Activated naive CD4-positive, alpha-beta T cell treated with anti-CD3 and anti-CD28 coated beads for 36 hours (primary cell): ENCODE measurements at regions of chr1 and their contacts with region 1.

Region 1: GRCh38 chr1:165914136-165914798 is 86.9 kb downstream of the UCK2 start:
- DNase-seq: peak; percentile 82
- H3K4me3 Mint-ChIP-seq: no peak overlapping the region
- H3K27ac Mint-ChIP-seq: no peak overlapping the region
- H3K4me1 Mint-ChIP-seq: no peaks in the 10 kb centered on the region
- H3K27me3 Mint-ChIP-seq: no peaks in the 10 kb centered on the region

Region 2: DNA sequence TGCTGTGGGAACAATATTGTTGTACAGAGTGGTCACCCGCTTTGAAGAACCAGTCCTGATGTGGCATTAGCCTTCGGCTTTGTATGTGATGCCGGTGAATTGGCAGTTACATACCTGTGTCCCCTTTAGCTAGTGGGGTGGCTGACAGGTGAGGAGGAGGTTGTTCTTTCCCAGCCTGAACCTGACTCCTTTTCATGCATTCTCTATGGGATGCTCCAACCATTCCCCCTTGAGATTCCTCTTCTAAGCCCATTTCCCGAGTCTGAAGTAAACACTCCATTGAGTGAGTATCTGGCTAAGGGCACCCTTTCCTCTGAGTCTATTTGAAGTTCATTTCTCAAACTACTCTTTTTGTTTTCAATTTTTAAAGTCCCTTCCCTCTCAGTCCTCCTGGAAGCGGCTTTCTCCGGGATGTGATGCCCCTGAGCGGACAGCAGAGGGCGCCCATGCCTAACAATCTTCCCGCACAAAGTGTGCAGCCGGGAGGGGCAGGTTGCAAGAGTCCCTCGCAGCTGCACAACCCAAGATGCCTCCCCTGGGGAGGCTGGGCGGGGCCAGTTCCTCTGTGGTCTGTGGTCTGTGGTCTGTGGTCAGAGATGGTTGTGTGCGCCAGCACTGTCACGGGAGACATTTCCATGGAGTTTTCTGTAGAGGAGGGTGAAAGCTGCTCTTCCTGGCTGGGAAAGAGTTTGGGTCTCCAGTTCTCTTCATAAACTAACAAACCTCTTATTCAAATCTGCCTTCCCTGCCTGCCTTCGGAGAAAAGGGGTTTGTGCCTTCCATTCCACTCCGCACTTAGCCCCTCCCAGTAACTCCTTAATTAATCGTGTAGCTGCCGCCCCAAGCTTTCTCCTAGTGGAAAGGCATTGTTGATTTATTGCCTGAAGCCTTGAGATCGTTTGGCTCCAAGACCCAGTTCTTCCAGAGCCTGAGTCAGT is 521.4 kb before region 1 on chr1:
- CTCF ChIA-PET with region 1: no interaction called
- intact Hi-C with region 1: loop called (anchors 2 kb)
- DNase-seq: peak; percentile 91
- H3K4me3 Mint-ChIP-seq: peak overlapping the region; percentile 52
- H3K27ac Mint-ChIP-seq: peak overlapping the region; percentile 61
- H3K4me1 Mint-ChIP-seq: peaks cover 15% of the 10 kb centered on the region
- H3K27me3 Mint-ChIP-seq: peaks cover 54% of the 10 kb centered on the region

Region 3: DNA sequence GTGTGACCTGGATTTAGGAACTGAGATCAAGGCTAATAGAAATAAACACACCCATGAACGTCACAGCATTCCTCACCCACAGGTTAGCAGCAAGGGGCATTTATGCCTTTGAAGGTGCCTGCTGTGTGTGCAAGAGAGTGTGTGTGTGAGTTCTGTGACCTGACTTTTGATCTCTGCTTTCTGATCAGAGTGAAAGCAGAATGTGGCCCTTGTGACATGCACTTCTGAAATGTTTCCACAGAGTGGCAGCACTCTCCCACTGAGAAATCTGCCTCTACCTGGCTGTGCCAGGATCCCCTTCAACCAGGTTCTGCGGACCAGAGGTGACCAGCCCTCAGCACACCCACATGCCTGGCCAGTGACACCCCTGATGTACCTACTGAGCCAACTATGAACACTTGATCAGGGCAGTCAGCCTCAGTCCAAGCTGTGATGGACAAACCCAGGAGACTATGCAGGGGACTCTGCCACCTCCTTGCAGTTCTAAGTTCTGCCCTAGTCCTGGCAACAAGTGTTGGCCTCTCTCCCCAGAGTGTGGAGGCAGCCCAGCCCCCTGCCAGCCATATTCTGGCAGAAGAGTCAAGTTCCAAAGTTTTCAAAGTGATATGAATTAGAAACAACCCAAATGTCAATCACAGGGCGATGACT is 510.3 kb before region 1 on chr1:
- CTCF ChIA-PET with region 1: no interaction called
- intact Hi-C with region 1: loop called (anchors 1 kb)
- DNase-seq: peak; percentile 57
- H3K4me3 Mint-ChIP-seq: no peak overlapping the region
- H3K27ac Mint-ChIP-seq: no peak overlapping the region
- H3K4me1 Mint-ChIP-seq: peaks cover 2% of the 10 kb centered on the region
- H3K27me3 Mint-ChIP-seq: peaks cover 17% of the 10 kb centered on the region

Region 4: GRCh38 chr1:165717918-165718515 is 196.2 kb before region 1 on chr1:
- CTCF ChIA-PET with region 1: interaction called, 5 read pairs
- intact Hi-C with region 1: loop called (anchors 1 kb)
- DNase-seq: peak; percentile 67
- H3K4me3 Mint-ChIP-seq: no peak overlapping the region
- H3K27ac Mint-ChIP-seq: no peak overlapping the region
- H3K4me1 Mint-ChIP-seq: no peaks in the 10 kb centered on the region
- H3K27me3 Mint-ChIP-seq: no peaks in the 10 kb centered on the region

Region 5: DNA sequence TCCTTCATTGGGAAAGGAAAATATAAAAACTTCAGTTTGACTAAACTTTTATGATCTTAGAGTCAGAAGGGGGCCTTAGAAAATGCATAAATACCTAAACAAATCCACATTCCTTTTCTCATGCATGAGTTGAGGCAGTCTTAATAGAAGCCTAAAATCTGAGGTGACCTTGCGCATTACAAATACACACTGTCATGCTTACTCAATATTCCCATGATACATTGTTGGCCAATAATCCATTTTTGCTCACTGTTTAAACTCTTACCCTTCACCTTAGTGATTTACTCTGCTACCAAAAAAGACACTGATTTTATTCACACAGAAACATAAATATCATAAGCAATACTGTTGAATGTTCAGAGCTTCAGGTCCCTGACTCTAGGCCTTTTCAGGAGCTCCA is 126.5 kb before region 1 on chr1:
- CTCF ChIA-PET with region 1: no interaction called
- intact Hi-C with region 1: no loop called
- DNase-seq: no peak
- H3K4me3 Mint-ChIP-seq: no peak overlapping the region
- H3K27ac Mint-ChIP-seq: no peak overlapping the region
- H3K4me1 Mint-ChIP-seq: no peaks in the 10 kb centered on the region
- H3K27me3 Mint-ChIP-seq: peaks cover 4% of the 10 kb centered on the region

Region 6: DNA sequence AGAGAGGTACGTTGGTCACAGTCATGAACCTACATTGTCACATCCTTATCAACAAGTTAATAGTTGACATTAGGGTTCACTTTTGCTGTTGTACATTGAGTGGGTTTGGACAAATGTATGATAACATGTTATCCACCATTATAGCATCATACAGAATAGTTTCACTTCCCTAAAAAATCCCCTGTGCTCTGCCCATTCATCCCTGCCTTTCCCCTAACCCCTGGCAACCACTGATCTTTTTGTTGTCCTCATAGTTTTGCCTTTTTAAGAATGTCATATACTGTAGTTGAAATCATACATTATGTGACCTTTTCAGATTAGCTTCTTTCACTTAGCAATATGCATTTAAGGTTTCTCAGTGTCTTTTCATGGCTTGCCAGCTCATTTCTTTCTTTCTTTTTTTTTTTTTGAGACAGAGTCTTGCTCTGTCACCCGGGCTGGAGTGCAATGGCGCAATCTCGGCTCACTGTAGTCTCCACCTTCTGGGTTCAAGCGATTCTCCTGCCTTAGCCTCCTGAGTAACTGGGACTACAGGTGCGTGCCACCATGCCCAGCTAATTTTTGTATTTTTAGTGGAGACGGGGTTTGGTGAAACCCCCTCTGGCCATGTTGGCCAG is 36.2 kb before region 1 on chr1:
- CTCF ChIA-PET with region 1: no interaction called
- intact Hi-C with region 1: loop called (anchors 5 kb)
- DNase-seq: peak; percentile 31
- H3K4me3 Mint-ChIP-seq: no peak overlapping the region
- H3K27ac Mint-ChIP-seq: no peak overlapping the region
- H3K4me1 Mint-ChIP-seq: peaks cover 44% of the 10 kb centered on the region
- H3K27me3 Mint-ChIP-seq: peaks cover 1% of the 10 kb centered on the region

Region 7: DNA sequence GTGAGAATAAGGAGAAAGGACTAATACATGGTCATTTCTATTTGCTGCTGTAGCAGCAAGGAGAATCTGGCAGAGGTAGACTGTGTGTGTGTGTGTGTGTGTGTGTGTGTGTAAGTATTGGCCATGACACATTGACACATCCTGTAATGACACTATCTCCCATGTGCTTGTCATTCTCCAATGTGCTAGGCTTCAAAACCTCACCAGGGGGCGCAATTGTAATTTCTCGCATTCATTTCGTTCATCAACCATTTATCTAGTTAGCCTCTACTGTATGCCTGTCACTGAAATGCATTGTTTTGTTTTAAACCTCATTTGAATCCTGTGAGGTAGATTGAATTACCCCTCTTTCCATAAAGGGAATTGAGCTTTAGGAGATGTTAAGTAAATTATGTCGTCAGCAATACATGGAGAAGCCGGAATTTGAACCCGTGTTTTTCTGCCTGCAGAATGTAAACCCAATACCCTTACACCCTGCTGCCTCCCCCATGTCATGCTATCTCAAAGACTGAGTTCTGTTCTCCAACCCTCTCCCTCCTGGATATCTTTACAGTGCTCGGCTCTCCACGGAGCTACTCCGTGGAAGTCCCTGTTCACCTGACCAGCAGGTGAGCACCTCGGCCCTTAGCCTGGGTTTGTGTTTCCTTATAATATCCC is 13.9 kb after region 1 on chr1:
- CTCF ChIA-PET with region 1: interaction called, 13 read pairs
- intact Hi-C with region 1: no loop called
- DNase-seq: peak; percentile 75
- H3K4me3 Mint-ChIP-seq: no peak overlapping the region
- H3K27ac Mint-ChIP-seq: no peak overlapping the region
- H3K4me1 Mint-ChIP-seq: peaks cover 2% of the 10 kb centered on the region
- H3K27me3 Mint-ChIP-seq: peaks cover 23% of the 10 kb centered on the region

Region 8: DNA sequence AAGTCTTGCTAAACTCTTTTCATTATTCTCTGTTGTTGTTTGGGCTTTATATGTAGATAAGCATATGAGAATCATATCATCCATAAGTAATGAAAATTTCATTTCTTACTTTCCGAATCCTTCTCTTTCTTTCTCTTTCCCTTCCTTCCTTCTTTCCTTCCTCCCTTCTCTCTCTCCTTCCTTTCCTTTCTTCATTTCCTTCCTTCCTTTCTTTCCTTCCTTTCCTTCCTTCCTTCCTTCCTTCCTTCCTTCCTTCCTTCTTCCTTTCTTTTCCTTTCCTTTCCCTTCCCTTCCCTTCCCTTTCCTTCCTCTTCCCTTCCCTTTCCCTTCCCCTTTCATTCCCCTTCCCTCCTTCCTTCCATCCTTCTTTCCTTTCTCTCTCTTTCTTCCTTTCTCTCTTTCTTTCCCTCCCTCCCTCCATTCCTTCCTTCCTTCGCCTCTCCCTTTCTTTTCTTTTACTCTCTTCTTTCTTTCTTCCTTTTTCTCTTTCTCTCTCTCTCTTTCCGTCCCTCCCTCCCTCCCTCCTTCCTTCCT is 60.4 kb after region 1 on chr1:
- CTCF ChIA-PET with region 1: no interaction called
- intact Hi-C with region 1: no loop called
- DNase-seq: no peak
- H3K4me3 Mint-ChIP-seq: no peak overlapping the region
- H3K27ac Mint-ChIP-seq: no peak overlapping the region
- H3K4me1 Mint-ChIP-seq: no peaks in the 10 kb centered on the region
- H3K27me3 Mint-ChIP-seq: peaks cover 14% of the 10 kb centered on the region

Region 9: DNA sequence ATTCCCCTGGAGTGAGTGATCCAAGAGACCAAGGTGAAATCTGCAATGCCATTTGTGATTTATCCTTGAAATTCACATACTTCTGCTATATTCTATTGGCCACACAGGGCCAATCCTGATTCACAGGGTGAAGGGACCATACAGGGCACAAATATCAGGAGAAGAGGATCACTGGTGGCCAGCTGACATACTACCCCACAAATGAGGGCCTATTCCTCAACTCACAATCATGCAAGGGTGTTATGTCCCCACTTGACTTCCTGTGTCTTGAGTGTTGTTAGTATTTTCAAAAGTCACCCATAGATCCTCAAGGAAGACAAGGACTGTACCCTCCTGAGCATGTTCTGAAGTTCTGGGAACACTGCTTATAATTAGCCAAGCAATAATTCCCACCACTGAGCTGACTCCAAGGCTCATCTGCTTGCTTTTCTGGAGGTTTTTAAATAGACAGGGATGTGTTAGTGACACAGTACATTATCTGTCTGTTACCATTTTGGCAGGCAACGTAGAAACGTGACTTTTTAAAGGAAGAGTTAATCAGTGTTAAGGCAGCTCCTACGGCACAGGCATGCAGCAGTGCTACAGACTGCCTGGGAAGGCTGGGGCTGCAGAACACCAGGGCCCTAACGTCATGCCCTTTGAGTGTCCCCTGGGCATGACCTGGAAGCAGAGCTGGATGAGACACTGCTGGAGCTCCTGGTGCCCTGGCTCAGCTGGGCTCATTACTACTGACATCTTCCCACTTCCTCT is 115.1 kb after region 1 on chr1:
- CTCF ChIA-PET with region 1: no interaction called
- intact Hi-C with region 1: no loop called
- DNase-seq: no peak
- H3K4me3 Mint-ChIP-seq: no peak overlapping the region
- H3K27ac Mint-ChIP-seq: no peak overlapping the region
- H3K4me1 Mint-ChIP-seq: no peaks in the 10 kb centered on the region
- H3K27me3 Mint-ChIP-seq: peaks cover 14% of the 10 kb centered on the region

Region 10: DNA sequence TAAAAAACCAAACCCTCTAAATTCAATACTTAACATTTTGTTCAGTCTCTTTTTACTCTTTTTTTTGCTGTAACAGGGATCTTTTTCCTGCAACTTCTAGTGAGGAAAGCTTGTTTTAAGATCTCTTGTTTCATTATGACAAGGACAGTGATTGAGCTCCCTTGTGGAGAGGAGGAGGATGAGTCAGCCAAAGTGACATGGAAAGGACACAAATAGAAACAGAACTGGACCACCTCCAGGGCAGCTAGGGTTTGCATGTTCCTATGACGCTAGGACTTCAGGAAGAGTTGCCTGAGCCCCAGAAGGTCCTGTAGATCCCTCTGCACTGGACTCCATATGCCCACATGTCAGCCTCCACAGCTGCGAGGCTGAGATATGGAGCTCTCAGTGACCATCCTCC is 465.2 kb after region 1 on chr1:
- CTCF ChIA-PET with region 1: no interaction called
- intact Hi-C with region 1: no loop called
- DNase-seq: no peak
- H3K4me3 Mint-ChIP-seq: no peak overlapping the region
- H3K27ac Mint-ChIP-seq: no peak overlapping the region
- H3K4me1 Mint-ChIP-seq: no peaks in the 10 kb centered on the region
- H3K27me3 Mint-ChIP-seq: peaks cover 11% of the 10 kb centered on the region